Esophagus muscularis mucosa (tissue), 4 donors: ENCODE measurements at regions of chr20 and their contacts with region 1.

Region 1: DNA sequence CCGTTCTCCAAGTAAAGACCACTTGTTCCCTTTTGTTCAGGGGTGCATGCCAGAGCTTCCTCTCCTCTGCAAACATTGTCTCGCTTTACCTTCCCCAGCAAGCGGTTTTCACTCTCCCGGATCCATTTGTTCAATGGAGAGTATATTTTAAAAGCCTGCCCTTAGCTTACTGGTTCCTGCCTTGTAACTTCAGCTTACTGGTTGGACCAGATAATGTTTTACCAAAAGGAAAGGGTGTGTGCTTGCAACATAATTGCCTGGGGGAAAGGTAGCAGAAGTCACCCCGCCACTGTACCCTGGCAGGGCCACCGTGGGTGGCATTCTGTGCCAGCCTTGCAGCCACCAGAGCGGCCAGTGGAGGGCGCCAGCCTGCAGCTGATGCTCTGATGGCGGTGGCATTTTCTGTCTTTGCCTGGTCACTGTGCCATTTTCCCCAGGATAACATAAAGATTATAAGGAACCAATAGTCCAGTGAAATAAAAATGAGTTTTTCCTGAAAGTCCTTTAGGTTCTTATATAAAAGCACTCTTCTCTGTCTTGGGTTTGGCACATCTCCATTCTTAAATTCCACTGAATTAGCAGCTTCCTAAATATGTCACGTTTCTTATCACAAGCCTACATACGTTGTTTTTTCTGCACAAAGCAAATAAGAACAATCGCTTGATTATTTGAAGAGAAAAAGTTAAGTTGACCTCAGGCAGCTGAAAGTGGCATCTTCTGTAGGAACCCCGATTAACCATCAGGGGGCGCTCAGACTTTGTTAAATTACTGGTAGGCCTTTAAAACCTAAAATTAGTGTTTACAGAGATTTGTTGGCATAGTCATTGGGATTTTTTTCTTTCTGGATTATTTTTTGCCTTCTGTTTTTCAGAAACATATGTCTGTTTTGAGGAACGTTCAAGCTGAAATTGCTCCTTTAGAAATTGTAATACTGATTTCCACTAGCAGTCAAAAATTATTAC is 67.4 kb upstream of the XRN2 start:
- DNase-seq: no peak
- H3K4me3 ChIP-seq: no peak overlapping the region
- H3K27ac ChIP-seq: no peak overlapping the region
- H3K4me1 ChIP-seq: peaks cover 0 to 11% (median 6%) of the 10 kb centered on the region in 4 donors
- H3K27me3 ChIP-seq: no peaks in the 10 kb centered on the region
- CTCF ChIP-seq: peak; percentile 58 to 69 (median 68)
- EP300 ChIP-seq: no peak
- POLR2A ChIP-seq: no peak

Region 2: DNA sequence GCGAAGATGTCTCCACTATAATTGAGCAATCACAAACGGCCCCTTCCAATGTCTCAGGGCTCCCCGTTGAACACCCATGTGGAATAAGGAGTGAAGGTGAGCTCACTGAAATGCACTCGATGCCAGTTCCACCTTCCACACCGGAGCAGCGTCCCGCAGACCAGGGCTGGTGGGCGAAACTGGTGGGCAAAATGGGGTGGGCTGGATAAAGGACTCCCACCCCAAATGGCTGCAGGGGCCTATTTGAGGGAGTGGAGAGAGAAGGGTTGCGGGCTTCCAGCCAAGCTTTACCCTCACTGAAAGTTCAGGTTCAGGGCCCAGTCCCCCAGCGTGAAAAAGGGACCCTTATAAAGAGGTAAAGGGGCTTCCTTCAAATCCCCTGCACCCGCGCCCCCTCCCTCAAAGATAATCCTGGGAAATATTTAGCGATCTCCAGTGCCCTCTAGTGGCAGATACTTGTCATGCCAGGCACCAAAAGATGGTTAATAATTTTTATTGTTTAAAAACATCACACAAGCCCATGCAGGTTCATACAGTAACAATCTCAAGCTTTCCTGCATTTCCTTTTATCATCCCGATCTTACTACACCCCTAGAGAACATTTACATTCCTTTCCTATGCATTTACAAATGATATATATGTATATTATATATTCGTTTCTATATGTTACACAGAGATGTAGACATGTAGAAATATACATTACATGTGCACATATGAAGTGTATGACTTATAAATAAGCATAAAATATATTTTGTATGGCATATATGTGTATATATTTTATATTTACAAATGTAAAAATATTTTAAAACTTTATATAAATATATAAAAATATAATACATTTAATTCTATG is 336.3 kb after region 1 on chr20:
- intact Hi-C with region 1: loop called (anchors 5 kb)
- DNase-seq: no peak
- H3K4me3 ChIP-seq: no peak overlapping the region
- H3K27ac ChIP-seq: no peak overlapping the region
- H3K4me1 ChIP-seq: no peaks in the 10 kb centered on the region
- H3K27me3 ChIP-seq: peaks cover 0 to 35% (median 0%) of the 10 kb centered on the region in 4 donors
- CTCF ChIP-seq: peak; percentile 64 to 88 (median 74)
- EP300 ChIP-seq: no peak
- POLR2A ChIP-seq: no peak